MCF 10A (cell line): ENCODE measurements at regions of chr2 and their contacts with region 1.

Region 1: DNA sequence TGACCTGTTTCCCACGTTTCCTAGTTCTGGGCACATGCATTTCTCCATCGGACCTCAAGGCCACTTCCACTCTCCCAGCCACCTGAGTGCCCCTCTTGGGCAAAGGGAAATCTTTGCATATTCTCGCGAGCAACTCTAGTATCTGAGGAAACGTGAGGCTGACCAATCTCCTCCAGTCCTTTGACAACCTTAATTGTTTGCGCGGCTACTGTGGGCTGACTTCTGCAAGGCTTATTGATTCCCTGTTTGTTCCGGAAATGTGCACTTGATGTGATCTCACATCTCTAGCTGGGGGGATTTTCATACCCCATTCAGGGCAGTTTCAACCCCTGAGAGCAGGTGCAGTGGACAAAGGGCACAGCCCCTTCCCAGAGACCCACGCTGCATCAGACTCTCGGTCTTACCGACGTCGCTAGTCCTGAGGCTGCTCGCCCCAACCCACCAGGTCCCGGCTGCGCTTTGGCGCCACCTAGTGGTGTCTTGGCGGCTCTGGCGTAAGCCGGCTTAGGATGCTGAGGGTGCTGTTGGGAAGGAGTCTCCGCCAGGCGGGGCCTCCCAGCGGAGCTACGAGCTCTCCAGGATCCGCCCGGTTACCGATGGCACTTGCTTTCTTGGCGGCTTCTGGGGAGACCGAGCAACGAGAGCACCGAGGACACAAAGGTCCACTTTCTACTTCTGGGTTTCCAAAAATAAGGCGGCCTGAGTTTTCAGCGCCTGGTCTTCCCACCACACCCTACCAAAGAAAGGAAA is 24.8 kb upstream of the SPR start:
- DNase-seq: peak; percentile 89
- H3K4me3 Mint-ChIP-seq: peak overlapping the region; percentile 41
- H3K27ac Mint-ChIP-seq: no peak overlapping the region
- H3K4me1 Mint-ChIP-seq: peaks cover 7% of the 10 kb centered on the region
- H3K27me3 Mint-ChIP-seq: peaks cover 28% of the 10 kb centered on the region
- CTCF ChIP-seq: peak; percentile 87

Region 2: DNA sequence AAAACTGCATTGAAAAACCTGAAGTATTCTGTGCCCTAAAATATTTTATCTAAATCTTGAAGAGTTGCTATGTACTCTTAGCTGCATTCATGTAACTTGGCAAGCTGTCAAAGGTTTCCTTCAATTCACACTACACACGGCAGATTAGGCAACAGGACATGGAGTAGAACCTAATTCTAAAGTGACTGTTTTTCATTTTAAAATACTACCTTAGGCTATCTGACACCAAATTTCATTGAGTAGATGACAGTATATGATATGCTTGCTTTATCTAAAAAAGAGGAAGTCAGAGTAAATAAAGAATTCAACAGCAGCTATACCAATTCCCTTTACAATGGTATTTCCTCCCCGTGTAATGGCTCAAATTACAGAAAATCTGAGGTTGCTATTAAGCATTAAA is 81.9 kb before region 1 on chr2:
- CTCF ChIA-PET with region 1: interaction called, 45 read pairs
- POLR2A ChIA-PET with region 1: interaction called, 8 read pairs
- intact Hi-C with region 1: no loop called
- DNase-seq: peak; percentile 80
- H3K4me3 Mint-ChIP-seq: no peak overlapping the region
- H3K27ac Mint-ChIP-seq: no peak overlapping the region
- H3K4me1 Mint-ChIP-seq: peaks cover 21% of the 10 kb centered on the region
- H3K27me3 Mint-ChIP-seq: no peaks in the 10 kb centered on the region
- CTCF ChIP-seq: no peak

Region 3: GRCh38 chr2:72793798-72794440 is 68.5 kb before region 1 on chr2:
- CTCF ChIA-PET with region 1: interaction called, 26 read pairs
- POLR2A ChIA-PET with region 1: interaction called, 3 read pairs
- intact Hi-C with region 1: no loop called
- DNase-seq: no peak
- H3K4me3 Mint-ChIP-seq: no peak overlapping the region
- H3K27ac Mint-ChIP-seq: peak overlapping the region; percentile 71
- H3K4me1 Mint-ChIP-seq: peaks cover 22% of the 10 kb centered on the region
- H3K27me3 Mint-ChIP-seq: no peaks in the 10 kb centered on the region
- CTCF ChIP-seq: no peak

Region 4: DNA sequence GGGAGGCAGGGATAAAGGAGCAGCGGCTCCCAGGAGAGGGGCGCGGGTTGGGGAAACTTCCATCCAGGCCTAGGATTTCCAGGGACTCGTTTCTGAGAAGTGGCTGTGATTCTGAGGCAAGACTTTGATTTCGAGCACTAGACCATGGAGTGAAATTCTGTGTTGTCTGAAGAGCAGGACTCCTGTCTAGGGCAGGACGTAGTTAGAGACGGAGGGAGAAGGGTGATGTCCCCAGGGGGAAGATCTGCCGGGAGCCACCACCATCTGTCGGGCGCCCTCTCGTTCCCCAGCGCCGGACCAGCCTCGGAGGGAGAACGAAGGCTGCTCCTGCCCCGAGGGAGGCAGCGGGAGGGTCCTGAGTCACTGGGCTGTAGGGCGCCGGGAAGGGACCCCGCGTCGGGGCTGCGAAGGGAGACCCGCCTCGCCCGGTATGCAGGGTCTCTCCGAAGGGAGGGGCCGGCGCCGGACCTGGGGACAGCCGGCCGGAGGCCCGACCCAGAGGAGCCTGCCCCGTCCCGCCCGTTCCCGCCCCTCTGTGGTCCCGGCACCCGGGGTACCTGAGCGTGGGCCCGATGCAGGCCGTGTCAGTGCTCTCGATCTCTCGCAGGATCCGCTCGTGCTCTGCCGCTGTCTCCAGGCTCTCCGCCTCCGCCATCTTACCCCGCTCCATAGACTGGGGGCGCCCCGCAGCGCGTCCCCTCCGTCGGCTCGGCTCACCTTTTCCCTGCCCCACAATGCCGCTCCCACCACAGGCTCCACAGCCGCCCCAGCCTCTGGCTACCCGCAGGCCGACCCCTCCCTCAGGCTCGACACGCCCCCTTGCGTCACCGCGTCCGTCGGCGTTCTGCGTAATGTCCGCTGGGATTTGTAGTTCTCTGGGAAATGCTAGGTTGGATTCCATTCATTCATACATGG is 36.9 kb before region 1 on chr2 and contains the start of gene EXOC6B:
- CTCF ChIA-PET with region 1: interaction called, 35 read pairs
- POLR2A ChIA-PET with region 1: interaction called, 3 read pairs
- intact Hi-C with region 1: no loop called
- DNase-seq: peak; percentile 89
- H3K4me3 Mint-ChIP-seq: peak within 1 kb of the TSS; percentile 95
- H3K27ac Mint-ChIP-seq: peak within 1 kb of the TSS; percentile 91
- H3K4me1 Mint-ChIP-seq: peaks cover 49% of the 10 kb centered on the region
- H3K27me3 Mint-ChIP-seq: no peaks in the 10 kb centered on the region
- CTCF ChIP-seq: no peak
- total RNA-seq, gene EXOC6B: 24.7 and 34.7 TPM in 2 replicates

Region 5: GRCh38 chr2:72841462-72842125 is 20.8 kb before region 1 on chr2:
- CTCF ChIA-PET with region 1: interaction called, 19 read pairs
- POLR2A ChIA-PET with region 1: interaction called, 3 read pairs
- intact Hi-C with region 1: no loop called
- DNase-seq: no peak
- H3K4me3 Mint-ChIP-seq: no peak overlapping the region
- H3K27ac Mint-ChIP-seq: no peak overlapping the region
- H3K4me1 Mint-ChIP-seq: no peaks in the 10 kb centered on the region
- H3K27me3 Mint-ChIP-seq: no peaks in the 10 kb centered on the region
- CTCF ChIP-seq: no peak

Region 6: DNA sequence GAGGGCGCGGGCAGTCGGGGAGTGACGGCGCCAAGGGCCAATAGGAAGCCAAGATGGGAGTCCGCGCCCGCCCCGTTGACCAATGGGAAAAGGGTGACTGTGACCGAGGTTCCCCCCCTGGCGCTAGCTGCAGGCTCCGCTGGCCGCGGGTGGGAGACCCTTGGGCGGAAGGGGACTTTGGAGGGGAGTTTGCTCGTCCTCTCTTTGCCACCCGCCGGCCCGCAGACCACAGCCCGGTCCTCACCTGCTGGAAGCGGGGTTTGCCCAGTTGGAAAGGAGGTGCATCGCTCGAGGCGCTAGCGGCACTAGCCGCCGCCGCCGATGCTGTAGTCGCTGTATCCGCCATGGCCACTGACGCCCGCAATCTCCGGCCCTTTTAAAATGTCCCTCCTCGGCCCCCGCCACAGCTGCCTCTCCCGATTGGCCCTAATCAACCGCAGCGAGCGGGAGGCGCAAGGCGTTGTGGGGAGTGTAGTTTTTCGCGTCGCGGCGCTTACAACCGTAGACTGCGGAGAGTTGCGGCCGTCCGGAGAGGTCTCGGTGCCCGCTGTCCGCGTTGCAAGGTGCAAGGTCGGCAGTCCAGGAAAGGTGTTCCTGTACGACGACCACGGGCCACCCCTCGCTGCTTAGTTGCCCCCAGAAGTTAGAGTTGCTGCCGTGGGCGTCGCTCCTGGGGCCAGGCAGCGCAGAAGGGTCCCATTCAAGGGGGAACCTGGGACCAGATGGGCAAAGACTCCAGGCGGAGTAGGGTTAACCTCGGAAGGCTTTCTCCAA is 209.1 kb after region 1 on chr2 and contains the start of gene SFXN5:
- CTCF ChIA-PET with region 1: no interaction called
- POLR2A ChIA-PET with region 1: no interaction called
- intact Hi-C with region 1: no loop called
- DNase-seq: peak; percentile 97
- H3K4me3 Mint-ChIP-seq: peak within 1 kb of the TSS; percentile 88
- H3K27ac Mint-ChIP-seq: peak within 1 kb of the TSS; percentile 88
- H3K4me1 Mint-ChIP-seq: peaks cover 34% of the 10 kb centered on the region
- H3K27me3 Mint-ChIP-seq: no peaks in the 10 kb centered on the region
- CTCF ChIP-seq: no peak
- total RNA-seq, gene SFXN5: 6.0 and 8.0 TPM in 2 replicates